HCT116 (cell line): ENCODE measurements at regions of chr12 and their contacts with region 1.

Region 1: DNA sequence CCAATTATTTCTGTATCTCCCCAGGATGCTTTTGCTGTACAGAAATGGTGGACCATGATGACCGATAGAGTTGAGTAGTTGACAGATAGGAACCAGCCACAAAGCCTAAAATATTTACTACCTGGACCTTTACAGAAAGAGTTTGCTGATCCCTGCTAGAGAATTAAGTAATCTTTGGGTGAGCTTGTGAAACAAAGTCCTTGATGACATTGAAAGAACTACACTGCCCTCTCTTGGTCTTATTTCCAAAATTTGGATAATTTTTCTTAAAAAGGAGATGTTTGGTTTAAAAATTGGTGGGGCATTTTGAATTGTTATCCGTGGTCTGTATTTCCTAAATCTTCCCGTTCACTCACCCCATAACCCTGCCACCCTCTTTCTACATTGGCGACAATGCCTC is 13.7 kb upstream of the TCTN1 start:
- DNase-seq: peak; percentile 55
- ATAC-seq: peak; percentile 49; the same call in 1 of the 2 replicates
- H3K4me3 ChIP-seq: no peak overlapping the region
- H3K27ac ChIP-seq: no peak overlapping the region
- H3K4me1 ChIP-seq: peaks cover 0 to 3% of the 10 kb centered on the region in 2 experiments; a peak in 1 of 4 replicates
- H3K27me3 ChIP-seq: no peaks in the 10 kb centered on the region
- CTCF ChIP-seq: peak in 2 of 3 experiments; percentile 52 to 94; a peak in 4 of 6 replicates
- POLR2A ChIP-seq: no peak
- RAD21 ChIP-seq: peak; percentile 94

Region 2: GRCh38 chr12:110431957-110432587 is 168.2 kb before region 1 on chr12:
- CTCF ChIA-PET with region 1: interaction called, 15 read pairs
- POLR2A ChIA-PET with region 1: no interaction called
- RAD21 ChIA-PET with region 1: interaction called in 1 of 2 experiments, 7 read pairs
- intact Hi-C with region 1: no loop called
- DNase-seq: no peak
- ATAC-seq: no peak; the same call in 1 of the 2 replicates
- H3K4me3 ChIP-seq: no peak overlapping the region; a peak in 1 of 4 replicates
- H3K27ac ChIP-seq: peak overlapping the region; percentile 35; the same call in 1 of the 2 replicates
- H3K4me1 ChIP-seq: peaks cover 4 to 11% of the 10 kb centered on the region in 2 experiments; a peak in 3 of 4 replicates
- H3K27me3 ChIP-seq: no peaks in the 10 kb centered on the region
- CTCF ChIP-seq: no peak
- POLR2A ChIP-seq: no peak
- RAD21 ChIP-seq: no peak

Region 3: GRCh38 chr12:110468212-110469048 is 131.8 kb before region 1 on chr12 and contains the starts of genes FAM216A and GPN3:
- CTCF ChIA-PET with region 1: interaction called, 57 read pairs
- POLR2A ChIA-PET with region 1: interaction called, 10 read pairs
- RAD21 ChIA-PET with region 1: no interaction called
- intact Hi-C with region 1: loop called (anchors 1 kb)
- DNase-seq: peak; percentile 98
- ATAC-seq: peak; percentile 84
- H3K4me3 ChIP-seq: peak within 1 kb of the TSS; percentile 85 to 86
- H3K27ac ChIP-seq: peak within 1 kb of the TSS; percentile 93
- H3K4me1 ChIP-seq: peaks cover 12 to 25% of the 10 kb centered on the region in 2 experiments
- H3K27me3 ChIP-seq: no peaks in the 10 kb centered on the region
- CTCF ChIP-seq: no peak
- POLR2A ChIP-seq: peak; percentile 96
- RAD21 ChIP-seq: no peak
- total RNA-seq, gene FAM216A: 10.1 TPM
- total RNA-seq, gene GPN3: 46.2 TPM

Region 4: GRCh38 chr12:110555577-110556406 is 44.5 kb before region 1 on chr12:
- CTCF ChIA-PET with region 1: interaction called, 34 read pairs
- POLR2A ChIA-PET with region 1: no interaction called
- RAD21 ChIA-PET with region 1: no interaction called
- intact Hi-C with region 1: loop called (anchors 1 kb)
- DNase-seq: no peak
- ATAC-seq: no peak
- H3K4me3 ChIP-seq: no peak overlapping the region
- H3K27ac ChIP-seq: no peak overlapping the region
- H3K4me1 ChIP-seq: peaks cover 0 to 6% of the 10 kb centered on the region in 2 experiments; a peak in 1 of 4 replicates
- H3K27me3 ChIP-seq: no peaks in the 10 kb centered on the region
- CTCF ChIP-seq: no peak
- POLR2A ChIP-seq: no peak
- RAD21 ChIP-seq: no peak

Region 5: DNA sequence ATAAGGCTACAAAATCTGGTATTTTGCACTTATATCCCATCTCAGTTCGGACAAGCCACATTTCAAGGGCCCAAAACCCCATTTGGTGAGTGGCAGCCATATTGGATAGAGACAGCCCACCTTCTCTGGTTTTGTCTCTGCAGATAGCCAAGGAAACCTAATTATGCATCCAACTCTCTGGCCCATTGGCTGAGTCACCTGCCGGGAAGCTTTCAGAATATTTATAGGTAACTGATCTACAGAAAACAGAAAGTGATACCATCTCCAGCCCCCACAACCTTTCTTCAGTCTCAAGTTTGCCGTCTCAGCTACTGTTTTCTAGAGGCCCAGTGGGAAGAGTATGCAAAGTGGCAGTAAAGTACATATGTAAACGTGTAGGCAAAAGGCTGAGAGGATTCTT is 176.2 kb after region 1 on chr12:
- CTCF ChIA-PET with region 1: no interaction called
- POLR2A ChIA-PET with region 1: no interaction called
- RAD21 ChIA-PET with region 1: no interaction called
- intact Hi-C with region 1: no loop called
- DNase-seq: no peak
- ATAC-seq: no peak
- H3K4me3 ChIP-seq: no peak overlapping the region
- H3K27ac ChIP-seq: no peak overlapping the region
- H3K4me1 ChIP-seq: no peaks in the 10 kb centered on the region
- H3K27me3 ChIP-seq: no peaks in the 10 kb centered on the region
- CTCF ChIP-seq: no peak
- POLR2A ChIP-seq: no peak
- RAD21 ChIP-seq: no peak

Region 6: DNA sequence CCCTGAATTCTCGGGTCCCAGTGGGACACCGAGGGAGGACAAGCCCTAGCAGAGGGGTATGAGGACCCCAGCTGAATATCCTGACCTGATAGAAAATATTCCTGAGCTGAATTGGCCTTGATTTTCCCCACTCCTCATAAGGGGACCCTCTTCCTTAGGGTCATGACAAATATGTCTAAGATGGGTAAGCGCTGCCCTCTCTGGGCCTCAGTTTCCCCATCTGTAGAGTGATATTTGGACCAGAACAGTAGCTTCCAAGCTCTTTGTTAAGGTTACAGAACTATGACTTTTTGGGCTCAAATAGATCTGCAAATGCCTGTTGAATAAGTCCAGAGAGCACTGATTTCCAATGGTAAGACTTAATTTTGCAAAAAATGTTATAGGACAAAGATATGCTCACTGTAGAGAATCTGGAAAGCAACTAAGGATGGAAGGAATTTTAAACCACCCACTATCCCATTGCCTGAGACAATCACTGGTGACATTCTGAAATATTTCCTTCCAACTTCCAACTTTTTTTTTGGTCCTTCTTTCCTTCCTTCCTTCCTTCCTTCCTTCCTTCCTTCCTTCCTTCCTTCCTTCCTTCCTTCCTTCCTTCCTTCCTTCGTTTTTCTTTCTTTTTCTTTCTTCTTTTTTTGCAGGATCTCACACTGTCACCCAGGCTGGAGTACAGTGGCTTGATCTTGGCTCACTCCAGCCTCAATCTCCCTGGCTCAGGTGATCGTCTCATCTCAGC is 288.2 kb after region 1 on chr12:
- CTCF ChIA-PET with region 1: interaction called, 6 read pairs
- POLR2A ChIA-PET with region 1: no interaction called
- RAD21 ChIA-PET with region 1: no interaction called
- intact Hi-C with region 1: loop called (anchors 10 kb)
- DNase-seq: no peak
- ATAC-seq: no peak
- H3K4me3 ChIP-seq: peak overlapping the region in 1 of 2 experiments; percentile 57; a peak in 3 of 4 replicates
- H3K27ac ChIP-seq: no peak overlapping the region
- H3K4me1 ChIP-seq: peaks cover 0 to 14% of the 10 kb centered on the region in 2 experiments; a peak in 2 of 4 replicates
- H3K27me3 ChIP-seq: no peaks in the 10 kb centered on the region
- CTCF ChIP-seq: no peak
- POLR2A ChIP-seq: no peak
- RAD21 ChIP-seq: no peak